PC-9 (cell line): ENCODE measurements at regions of chr19 and their contacts with region 1.

Region 1: GRCh38 chr19:56601375-56601774 is 6.3 kb downstream of the ZNF71 start:
- DNase-seq: no peak
- H3K4me3 ChIP-seq: no peak overlapping the region
- H3K27ac ChIP-seq: no peak overlapping the region
- H3K4me1 ChIP-seq: no peaks in the 10 kb centered on the region
- H3K27me3 ChIP-seq: no peaks in the 10 kb centered on the region
- CTCF ChIP-seq: no peak

Region 2: DNA sequence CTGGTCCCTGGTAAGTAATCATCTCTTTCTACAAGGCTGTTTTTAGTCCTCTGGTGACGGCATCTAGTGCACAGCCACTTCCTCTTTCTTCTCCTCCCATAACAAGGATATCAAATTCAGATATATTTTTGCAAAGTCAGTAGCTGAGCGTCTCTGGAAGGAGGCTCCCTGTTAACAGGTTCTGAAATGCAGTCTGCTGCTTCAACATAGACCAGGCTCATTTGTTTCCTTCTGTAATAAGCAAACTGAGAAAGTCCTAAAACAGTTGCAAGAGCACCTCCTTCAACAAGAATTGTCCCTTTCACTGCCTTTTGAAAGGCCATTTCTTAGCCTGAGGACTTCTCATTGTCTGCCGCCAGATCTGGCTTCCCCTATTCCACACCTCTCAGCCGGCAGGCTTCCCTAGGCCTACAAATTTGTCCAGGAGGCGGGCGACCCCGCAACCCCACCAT is 279.4 kb before region 1 on chr19:
- CTCF ChIA-PET with region 1: interaction called, 18 read pairs
- POLR2A ChIA-PET with region 1: no interaction called
- intact Hi-C with region 1: no loop called
- DNase-seq: no peak
- H3K4me3 ChIP-seq: no peak overlapping the region
- H3K27ac ChIP-seq: no peak overlapping the region
- H3K4me1 ChIP-seq: no peaks in the 10 kb centered on the region
- H3K27me3 ChIP-seq: peaks cover 48% of the 10 kb centered on the region
- CTCF ChIP-seq: no peak

Region 3: DNA sequence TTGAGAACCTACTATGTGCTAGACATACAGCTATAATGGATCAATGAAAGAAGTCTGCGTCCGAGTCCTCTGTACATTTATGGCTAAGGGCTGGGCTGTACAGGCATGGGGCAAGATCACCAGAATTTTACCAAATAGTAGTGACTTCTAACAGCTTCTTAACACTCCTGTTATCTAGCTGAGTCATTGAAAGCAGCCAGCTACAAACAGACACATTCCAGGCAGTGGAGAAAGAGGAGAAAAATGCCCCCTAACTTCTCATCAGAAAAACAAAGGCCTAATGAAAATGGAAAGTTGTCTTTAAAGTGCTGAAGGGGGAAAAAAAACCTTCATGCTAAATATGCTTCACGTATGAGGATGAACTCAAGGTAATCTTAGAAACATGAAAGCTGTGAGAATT is 110.0 kb before region 1 on chr19:
- CTCF ChIA-PET with region 1: no interaction called
- POLR2A ChIA-PET with region 1: no interaction called
- intact Hi-C with region 1: no loop called
- DNase-seq: no peak
- H3K4me3 ChIP-seq: no peak overlapping the region
- H3K27ac ChIP-seq: no peak overlapping the region
- H3K4me1 ChIP-seq: no peaks in the 10 kb centered on the region
- H3K27me3 ChIP-seq: 0 out of 2 replicates have a peak, but pooled peaks cover 6% of the 10 kb centered on the region
- CTCF ChIP-seq: no peak

Region 4: GRCh38 chr19:56660381-56661107 is 59.2 kb after region 1 on chr19:
- CTCF ChIA-PET with region 1: no interaction called
- POLR2A ChIA-PET with region 1: no interaction called
- intact Hi-C with region 1: no loop called
- DNase-seq: no peak
- H3K4me3 ChIP-seq: no peak overlapping the region
- H3K27ac ChIP-seq: no peak overlapping the region
- H3K4me1 ChIP-seq: no peaks in the 10 kb centered on the region
- H3K27me3 ChIP-seq: no peaks in the 10 kb centered on the region
- CTCF ChIP-seq: peak; percentile 46; the same call in 1 of the 2 replicates

Region 5: GRCh38 chr19:58228585-58229254 is 1627.3 kb after region 1 on chr19 and contains the start of gene ZNF544:
- CTCF ChIA-PET with region 1: no interaction called
- POLR2A ChIA-PET with region 1: no interaction called
- intact Hi-C with region 1: no loop called
- DNase-seq: peak; percentile 57 to 71
- H3K4me3 ChIP-seq: peak within 1 kb of the TSS; percentile 75
- H3K27ac ChIP-seq: peak within 1 kb of the TSS; percentile 34; the same call in 1 of the 2 replicates
- H3K4me1 ChIP-seq: no peaks in the 10 kb centered on the region
- H3K27me3 ChIP-seq: no peaks in the 10 kb centered on the region
- CTCF ChIP-seq: no peak
- total RNA-seq, gene ZNF544: 29.5 and 32.7 TPM in 2 replicates